ENCODE measurements at regions of chr1 and their contacts with region 1.

Region 1: DNA sequence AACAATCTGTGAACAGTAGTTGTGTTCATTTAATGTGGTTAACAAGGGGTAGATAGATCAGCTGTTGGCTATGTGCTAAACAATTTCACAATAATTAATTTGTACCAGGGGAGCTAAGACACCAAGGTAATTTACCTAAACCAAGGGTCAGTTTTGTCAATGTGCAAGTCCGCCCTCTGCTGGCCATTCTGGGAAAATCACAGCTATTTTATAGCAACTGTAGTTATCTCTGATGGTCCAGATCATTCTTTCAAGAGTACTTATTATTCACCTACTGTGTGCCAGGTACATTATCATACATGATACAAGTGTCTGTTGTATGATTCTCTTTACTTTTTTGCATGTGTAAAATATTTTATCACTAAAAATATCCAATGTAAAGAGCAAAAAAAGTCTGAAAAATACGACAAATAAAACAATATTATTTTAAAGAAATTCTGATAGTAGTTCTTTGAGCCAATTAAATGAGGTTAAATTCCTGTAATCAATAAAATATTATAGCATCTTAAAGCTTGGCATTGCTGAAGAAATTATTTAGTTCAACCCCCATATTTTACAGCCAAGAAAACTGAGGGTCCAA is 312.3 kb upstream of the FAM78B start:
- DNase-seq: peak; percentile 70
- H3K4me3 Mint-ChIP-seq: no peak overlapping the region
- H3K27ac Mint-ChIP-seq: no peak overlapping the region
- H3K4me1 Mint-ChIP-seq: no peaks in the 10 kb centered on the region
- H3K27me3 Mint-ChIP-seq: no peaks in the 10 kb centered on the region

Region 2: GRCh38 chr1:165928075-165928731 is 550.9 kb before region 1 on chr1:
- CTCF ChIA-PET with region 1: interaction called, 59 read pairs
- DNase-seq: peak; percentile 71
- H3K4me3 Mint-ChIP-seq: no peak overlapping the region
- H3K27ac Mint-ChIP-seq: no peak overlapping the region
- H3K4me1 Mint-ChIP-seq: no peaks in the 10 kb centered on the region
- H3K27me3 Mint-ChIP-seq: peaks cover 24% of the 10 kb centered on the region

Region 3: GRCh38 chr1:166089804-166090203 is 389.3 kb before region 1 on chr1:
- CTCF ChIA-PET with region 1: no interaction called
- DNase-seq: peak; percentile 37
- H3K4me3 Mint-ChIP-seq: no peak overlapping the region
- H3K27ac Mint-ChIP-seq: no peak overlapping the region
- H3K4me1 Mint-ChIP-seq: peaks cover 12% of the 10 kb centered on the region
- H3K27me3 Mint-ChIP-seq: peaks cover 3% of the 10 kb centered on the region

Region 4: DNA sequence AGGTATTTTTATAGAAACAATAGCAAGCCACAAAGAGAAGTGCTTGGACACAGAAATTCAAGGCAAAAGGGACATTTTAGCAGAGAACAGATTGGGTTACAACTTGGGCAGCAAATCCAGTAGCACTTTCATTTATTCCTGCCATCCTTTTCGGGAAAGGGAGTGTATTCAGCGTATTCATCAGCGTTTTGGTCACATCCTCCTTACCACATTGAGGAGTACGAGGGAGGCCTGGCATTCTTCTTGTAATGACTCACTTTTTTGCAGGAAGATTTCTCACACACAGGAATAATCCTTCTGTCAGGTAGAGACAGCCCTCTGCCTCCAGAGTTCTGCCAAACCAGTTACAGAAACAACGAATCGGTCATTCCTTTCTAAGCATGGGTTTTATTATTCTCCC is 294.2 kb before region 1 on chr1:
- CTCF ChIA-PET with region 1: no interaction called
- DNase-seq: no peak
- H3K4me3 Mint-ChIP-seq: no peak overlapping the region
- H3K27ac Mint-ChIP-seq: no peak overlapping the region
- H3K4me1 Mint-ChIP-seq: no peaks in the 10 kb centered on the region
- H3K27me3 Mint-ChIP-seq: no peaks in the 10 kb centered on the region

Region 5: DNA sequence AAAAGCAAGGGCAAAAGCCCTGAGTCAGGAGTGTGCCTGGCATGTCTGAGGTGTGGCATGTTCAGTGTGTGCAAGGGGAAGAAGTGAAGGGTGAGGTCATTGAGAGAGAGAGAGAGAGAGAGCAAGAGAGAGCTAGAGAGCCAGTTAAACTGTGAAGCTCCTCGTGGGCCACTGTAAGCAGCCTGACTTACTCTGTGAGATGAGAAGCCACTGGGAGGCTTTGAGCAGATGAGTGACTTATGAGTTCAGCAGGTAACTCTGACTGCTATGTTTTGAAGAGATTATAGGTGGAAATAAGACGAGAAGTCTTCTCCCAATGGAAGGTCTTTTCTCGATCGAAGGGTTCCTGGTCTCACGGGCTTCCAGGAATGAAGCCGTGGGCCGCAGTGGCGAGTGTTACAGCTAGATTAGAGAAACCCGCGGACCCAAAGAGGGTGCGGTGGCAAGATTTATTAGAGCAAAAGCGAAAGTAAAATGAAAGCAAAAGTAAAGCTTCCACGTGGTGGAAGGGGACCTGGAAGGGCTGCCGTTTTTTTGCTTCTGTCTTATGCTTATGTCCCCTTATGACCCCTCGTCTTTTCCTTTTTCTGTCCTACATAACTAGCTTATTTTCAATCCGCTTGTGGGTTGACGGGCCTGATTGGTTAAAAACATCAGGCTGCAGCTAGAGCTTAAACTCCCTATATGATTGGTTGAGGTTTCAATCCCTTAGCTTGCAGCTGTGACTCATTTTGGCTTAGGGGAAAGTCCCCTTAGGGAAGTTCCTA is 10.7 kb after region 1 on chr1:
- CTCF ChIA-PET with region 1: interaction called, 15 read pairs
- DNase-seq: peak; percentile 61
- H3K4me3 Mint-ChIP-seq: no peak overlapping the region
- H3K27ac Mint-ChIP-seq: no peak overlapping the region
- H3K4me1 Mint-ChIP-seq: peaks cover 12% of the 10 kb centered on the region
- H3K27me3 Mint-ChIP-seq: peaks cover 10% of the 10 kb centered on the region

Measured in activated naive CD4-positive, alpha-beta T cell treated with anti-CD3 and anti-CD28 coated beads, Interleukin-2, amount 10 ng/mL, durations not matched to agents 7 days and 5 days (primary cell).